PC-9 (cell line): ENCODE measurements at regions of chr2 and their contacts with region 1.

Region 1: GRCh38 chr2:238462782-238463396 is 36.2 kb downstream of the ASB1 start:
- DNase-seq: peak in 1 of 2 experiments; percentile 52
- H3K4me3 ChIP-seq: no peak overlapping the region
- H3K27ac ChIP-seq: no peak overlapping the region
- H3K4me1 ChIP-seq: no peaks in the 10 kb centered on the region
- H3K27me3 ChIP-seq: peaks cover 30% of the 10 kb centered on the region
- CTCF ChIP-seq: peak; percentile 93

Region 2: GRCh38 chr2:238263204-238264071 is 199.5 kb before region 1 on chr2:
- CTCF ChIA-PET with region 1: interaction called, 19 read pairs
- POLR2A ChIA-PET with region 1: no interaction called
- intact Hi-C with region 1: no loop called
- DNase-seq: peak; percentile 64 to 87
- H3K4me3 ChIP-seq: no peak overlapping the region
- H3K27ac ChIP-seq: no peak overlapping the region
- H3K4me1 ChIP-seq: 0 out of 2 replicates have a peak, but pooled peaks cover 5% of the 10 kb centered on the region
- H3K27me3 ChIP-seq: no peaks in the 10 kb centered on the region
- CTCF ChIP-seq: peak; percentile 94

Region 3: GRCh38 chr2:238370823-238371372 is 92.0 kb before region 1 on chr2:
- CTCF ChIA-PET with region 1: no interaction called
- POLR2A ChIA-PET with region 1: no interaction called
- intact Hi-C with region 1: loop called (anchors 2 kb)
- DNase-seq: peak in 1 of 2 experiments; percentile 58
- H3K4me3 ChIP-seq: no peak overlapping the region
- H3K27ac ChIP-seq: no peak overlapping the region
- H3K4me1 ChIP-seq: no peaks in the 10 kb centered on the region
- H3K27me3 ChIP-seq: no peaks in the 10 kb centered on the region
- CTCF ChIP-seq: peak; percentile 71

Region 4: GRCh38 chr2:239098288-239098970 is 635.5 kb after region 1 on chr2:
- CTCF ChIA-PET with region 1: no interaction called
- POLR2A ChIA-PET with region 1: no interaction called
- intact Hi-C with region 1: no loop called
- DNase-seq: no peak
- H3K4me3 ChIP-seq: no peak overlapping the region
- H3K27ac ChIP-seq: no peak overlapping the region
- H3K4me1 ChIP-seq: no peaks in the 10 kb centered on the region
- H3K27me3 ChIP-seq: no peaks in the 10 kb centered on the region
- CTCF ChIP-seq: no peak